MCF 10A (cell line): ENCODE measurements at regions of chr4 and their contacts with region 1.

Region 1: DNA sequence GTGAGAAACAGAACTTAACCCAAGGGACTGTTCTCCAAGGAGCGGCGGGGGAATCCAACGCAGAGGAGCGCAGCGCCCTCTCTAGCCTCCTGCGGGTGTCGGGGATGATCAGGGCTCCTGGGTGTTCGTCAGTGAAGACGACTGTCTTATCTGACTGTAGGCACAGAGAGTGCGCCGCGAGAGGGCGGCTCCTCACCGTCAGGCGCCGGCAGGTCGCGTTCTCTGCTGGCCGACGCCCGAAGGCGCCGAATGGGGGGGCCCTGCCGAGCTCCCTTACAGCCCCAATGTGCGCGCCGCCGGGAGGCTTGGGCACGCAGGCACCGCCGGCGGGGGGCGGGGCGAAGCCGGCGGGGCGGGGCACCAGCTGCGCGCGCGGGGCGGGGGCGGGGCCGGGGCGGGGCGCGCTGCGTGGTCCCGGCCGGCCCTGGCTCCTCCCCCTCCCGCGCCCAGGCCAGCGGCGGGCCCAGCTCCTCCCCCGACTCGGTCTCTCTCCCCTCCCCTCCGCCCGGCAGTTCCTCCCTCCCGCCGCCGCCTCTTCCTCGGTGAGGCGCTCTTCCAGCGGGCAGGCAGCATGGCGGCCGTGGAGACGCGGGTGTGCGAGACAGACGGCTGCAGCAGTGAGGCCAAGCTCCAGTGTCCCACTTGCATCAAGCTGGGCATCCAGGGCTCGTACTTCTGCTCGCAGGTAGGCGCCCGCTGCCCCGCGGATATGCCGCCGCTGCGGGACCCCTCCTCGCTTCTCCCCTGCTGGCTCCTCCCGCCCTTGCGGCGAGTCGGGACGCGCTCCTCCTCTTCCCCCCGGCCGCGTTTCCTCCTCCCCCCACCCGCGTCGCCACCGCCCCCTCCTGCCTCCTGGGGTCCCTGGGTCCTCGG is at the start of gene METAP1:
- DNase-seq: peak; percentile 96
- H3K4me3 Mint-ChIP-seq: peak within 1 kb of the TSS; percentile 75
- H3K27ac Mint-ChIP-seq: peak within 1 kb of the TSS; percentile 84
- H3K4me1 Mint-ChIP-seq: peaks cover 14% of the 10 kb centered on the region
- H3K27me3 Mint-ChIP-seq: no peaks in the 10 kb centered on the region
- CTCF ChIP-seq: peak; percentile 58
- total RNA-seq, gene METAP1: 43.5 and 61.4 TPM in 2 replicates

Region 2: DNA sequence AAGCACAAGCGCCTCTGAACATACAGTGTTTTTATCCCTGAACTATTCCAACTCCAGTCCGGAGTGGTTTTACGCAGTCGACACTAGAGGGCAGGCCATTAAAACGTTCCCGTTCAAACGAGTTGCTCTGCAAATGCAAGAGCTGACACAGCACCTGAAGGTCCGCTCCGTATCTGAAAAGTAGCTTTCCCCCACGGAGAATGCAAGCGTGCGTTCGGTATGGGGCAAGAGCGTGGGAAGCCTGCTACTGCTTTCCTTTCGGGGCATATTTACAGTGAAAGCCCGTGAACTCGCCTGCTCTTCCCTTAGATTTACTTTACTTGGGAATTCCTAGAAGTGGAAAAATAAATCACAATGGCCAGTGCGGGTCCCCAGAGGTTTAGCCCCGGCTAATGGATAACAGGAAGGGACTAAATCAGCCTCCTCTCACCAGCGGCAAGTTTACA is 527.8 kb before region 1 on chr4:
- CTCF ChIA-PET with region 1: interaction called, 4 read pairs
- POLR2A ChIA-PET with region 1: interaction called, 3 read pairs
- intact Hi-C with region 1: loop called (anchors 1 kb)
- DNase-seq: peak; percentile 86
- H3K4me3 Mint-ChIP-seq: peak overlapping the region; percentile 71
- H3K27ac Mint-ChIP-seq: no peak overlapping the region
- H3K4me1 Mint-ChIP-seq: peaks cover 11% of the 10 kb centered on the region
- H3K27me3 Mint-ChIP-seq: no peaks in the 10 kb centered on the region
- CTCF ChIP-seq: peak; percentile 68

Region 3: DNA sequence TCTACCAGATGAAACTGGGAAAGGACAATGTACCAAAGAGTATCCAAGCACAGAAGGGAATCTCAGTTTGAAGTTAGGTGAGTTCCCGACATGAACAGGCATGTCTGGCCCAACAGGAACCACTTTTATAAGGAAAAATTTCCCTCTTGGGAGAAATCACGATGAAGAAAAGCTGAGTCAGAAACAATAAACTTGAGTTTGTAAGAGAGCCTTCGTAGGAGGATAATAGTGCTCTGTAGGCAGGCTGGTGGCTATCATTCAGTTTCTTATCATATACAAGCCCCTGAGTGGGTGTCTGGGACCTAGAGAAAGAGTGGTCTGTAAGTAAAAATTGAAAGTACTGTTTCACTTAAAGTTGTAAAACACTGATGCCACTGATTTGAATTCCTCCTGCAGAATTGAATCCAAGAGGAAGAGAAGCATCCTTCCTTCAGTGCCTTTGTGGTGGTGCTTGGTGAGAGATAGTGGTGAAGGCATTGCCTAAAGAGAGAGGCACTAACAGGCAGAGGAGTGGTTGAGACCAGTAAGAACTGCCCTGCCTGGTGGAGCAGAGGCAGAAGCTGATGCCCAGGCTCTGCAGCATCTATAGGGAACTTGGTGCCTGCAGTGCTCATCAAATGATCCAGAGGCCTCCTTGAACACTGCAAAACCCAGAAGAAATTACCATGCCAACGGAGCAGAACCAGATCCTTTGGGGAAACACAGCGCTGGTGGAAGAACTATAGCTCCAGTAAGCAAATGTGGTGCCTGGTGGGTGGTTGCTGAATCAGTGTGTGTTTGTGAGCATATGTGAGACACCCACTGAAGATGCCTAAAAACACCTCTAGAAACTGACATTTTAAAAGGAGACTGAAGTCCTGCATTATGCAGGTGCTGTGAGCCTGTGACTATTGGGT is 31.6 kb before region 1 on chr4:
- CTCF ChIA-PET with region 1: interaction called, 24 read pairs
- POLR2A ChIA-PET with region 1: interaction called, 3 read pairs
- intact Hi-C with region 1: no loop called
- DNase-seq: peak; percentile 41
- H3K4me3 Mint-ChIP-seq: no peak overlapping the region
- H3K27ac Mint-ChIP-seq: peak overlapping the region; percentile 90
- H3K4me1 Mint-ChIP-seq: peaks cover 11% of the 10 kb centered on the region
- H3K27me3 Mint-ChIP-seq: no peaks in the 10 kb centered on the region
- CTCF ChIP-seq: no peak

Region 4: GRCh38 chr4:99043346-99043745 is 47.9 kb after region 1 on chr4:
- CTCF ChIA-PET with region 1: interaction called, 10 read pairs
- POLR2A ChIA-PET with region 1: interaction called, 3 read pairs
- intact Hi-C with region 1: no loop called
- DNase-seq: no peak
- H3K4me3 Mint-ChIP-seq: no peak overlapping the region
- H3K27ac Mint-ChIP-seq: no peak overlapping the region
- H3K4me1 Mint-ChIP-seq: no peaks in the 10 kb centered on the region
- H3K27me3 Mint-ChIP-seq: no peaks in the 10 kb centered on the region
- CTCF ChIP-seq: no peak

Region 5: GRCh38 chr4:99067617-99068016 is 72.2 kb after region 1 on chr4:
- CTCF ChIA-PET with region 1: interaction called, 17 read pairs
- POLR2A ChIA-PET with region 1: interaction called, 11 read pairs
- intact Hi-C with region 1: no loop called
- DNase-seq: no peak
- H3K4me3 Mint-ChIP-seq: no peak overlapping the region
- H3K27ac Mint-ChIP-seq: no peak overlapping the region
- H3K4me1 Mint-ChIP-seq: no peaks in the 10 kb centered on the region
- H3K27me3 Mint-ChIP-seq: no peaks in the 10 kb centered on the region
- CTCF ChIP-seq: no peak

Region 6: DNA sequence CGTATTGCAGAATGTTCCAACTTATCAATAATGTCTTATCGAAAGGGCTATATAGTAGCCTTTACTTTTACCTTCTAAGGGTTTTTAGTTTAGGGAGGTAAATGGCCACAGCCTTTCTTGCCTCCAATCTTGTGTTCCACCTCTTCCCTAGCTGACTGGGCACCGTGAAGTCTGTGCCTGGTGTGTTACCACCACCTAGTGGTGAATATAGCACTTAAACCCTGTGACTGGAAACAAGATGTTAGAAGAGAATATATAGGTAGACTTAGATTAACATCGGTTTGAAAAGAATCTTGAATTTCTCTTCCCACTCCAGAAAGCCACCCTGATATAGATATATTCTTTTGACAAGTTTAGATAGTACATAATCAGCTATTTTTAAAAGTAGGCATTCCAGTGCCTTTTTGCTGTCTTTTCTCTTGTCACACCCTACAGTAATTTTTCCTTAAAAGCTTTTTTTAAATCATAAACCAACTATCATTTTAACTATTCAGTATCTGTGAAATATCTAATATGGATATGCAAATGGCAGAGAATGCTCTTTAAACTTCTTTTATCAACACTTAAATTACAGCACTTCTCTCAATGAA is 467.6 kb after region 1 on chr4:
- CTCF ChIA-PET with region 1: interaction called, 13 read pairs
- POLR2A ChIA-PET with region 1: interaction called, 3 read pairs
- intact Hi-C with region 1: loop called (anchors 2 kb)
- DNase-seq: peak; percentile 82
- H3K4me3 Mint-ChIP-seq: no peak overlapping the region
- H3K27ac Mint-ChIP-seq: no peak overlapping the region
- H3K4me1 Mint-ChIP-seq: peaks cover 11% of the 10 kb centered on the region
- H3K27me3 Mint-ChIP-seq: peaks cover 12% of the 10 kb centered on the region
- CTCF ChIP-seq: peak; percentile 84